Activated CD4-positive, alpha-beta T cell treated with anti-CD3 and anti-CD28 coated beads, Interleukin-2, amount 10 ng/mL, durations not matched to agents 24 days and 14 days (primary cell): ENCODE measurements at regions of chr12 and their contacts with region 1.

Region 1: GRCh38 chr12:79512053-79512452 is 178.7 kb downstream of the PAWR start:
- DNase-seq: no peak
- H3K4me3 Mint-ChIP-seq: no peak overlapping the region
- H3K27ac Mint-ChIP-seq: no peak overlapping the region
- H3K4me1 Mint-ChIP-seq: no peaks in the 10 kb centered on the region
- H3K27me3 Mint-ChIP-seq: no peaks in the 10 kb centered on the region

Region 2: DNA sequence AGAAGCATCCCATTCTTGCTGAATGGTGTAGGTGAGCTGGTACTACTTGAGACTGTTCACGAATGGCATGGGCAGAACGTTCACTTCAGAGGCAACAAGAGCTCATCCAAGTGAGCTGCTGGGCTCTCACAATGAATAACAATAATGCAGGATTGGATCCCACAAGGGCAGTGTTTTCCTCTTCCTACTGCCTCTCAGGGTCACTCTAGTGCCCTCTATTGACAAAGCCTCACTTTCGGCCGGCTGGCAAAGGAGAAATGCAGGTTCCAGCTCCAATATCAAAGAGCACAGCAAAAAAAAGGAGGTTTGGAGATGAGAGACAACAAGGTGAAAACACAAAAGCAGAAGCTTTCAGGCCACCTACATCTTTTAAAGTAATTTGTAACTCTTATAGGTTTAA is 1120.8 kb after region 1 on chr12:
- intact Hi-C with region 1: loop called (anchors 10 kb)
- DNase-seq: no peak
- H3K4me3 Mint-ChIP-seq: no peak overlapping the region
- H3K27ac Mint-ChIP-seq: no peak overlapping the region
- H3K4me1 Mint-ChIP-seq: no peaks in the 10 kb centered on the region
- H3K27me3 Mint-ChIP-seq: no peaks in the 10 kb centered on the region